Left ventricle myocardium superior (tissue), 1 donor: ENCODE measurements at regions of chr10 and their contacts with region 1.

Region 1: GRCh38 chr10:92880233-92880861 is 32.0 kb downstream of the EXOC6 start:
- DNase-seq: no peak
- ATAC-seq: peak; percentile 57

Region 2: DNA sequence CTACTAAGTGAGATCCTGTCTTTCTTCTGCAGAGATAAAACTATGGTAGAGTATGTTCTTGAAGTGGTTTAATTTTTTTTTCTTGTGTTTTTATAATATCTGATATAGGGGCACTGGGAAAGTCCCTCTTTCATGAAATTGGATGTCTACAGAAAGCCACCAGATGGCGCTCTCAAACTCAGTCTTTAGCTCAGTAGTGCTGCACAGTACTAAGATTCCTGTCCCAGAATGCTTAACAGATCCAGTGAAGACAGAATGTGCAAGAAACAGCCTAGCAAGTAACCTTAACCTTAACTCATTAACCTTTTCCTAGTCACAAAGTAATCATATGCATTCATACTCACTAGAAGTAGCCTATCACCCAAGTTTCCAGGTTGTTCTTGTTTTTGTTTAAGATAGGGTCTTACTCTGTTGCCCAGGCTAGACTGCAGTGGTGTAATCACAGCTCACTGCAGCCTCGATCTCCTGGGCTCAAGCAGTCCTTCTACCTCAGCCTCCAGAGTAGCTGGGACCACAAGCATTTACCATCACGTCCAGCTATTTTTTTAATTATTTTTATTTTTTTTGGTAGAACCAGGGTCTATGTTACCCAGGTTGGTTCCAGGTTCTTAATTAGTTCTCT is 363.2 kb before region 1 on chr10:
- intact Hi-C with region 1: loop called (anchors 10 kb)
- DNase-seq: no peak
- ATAC-seq: peak; percentile 81

Region 3: DNA sequence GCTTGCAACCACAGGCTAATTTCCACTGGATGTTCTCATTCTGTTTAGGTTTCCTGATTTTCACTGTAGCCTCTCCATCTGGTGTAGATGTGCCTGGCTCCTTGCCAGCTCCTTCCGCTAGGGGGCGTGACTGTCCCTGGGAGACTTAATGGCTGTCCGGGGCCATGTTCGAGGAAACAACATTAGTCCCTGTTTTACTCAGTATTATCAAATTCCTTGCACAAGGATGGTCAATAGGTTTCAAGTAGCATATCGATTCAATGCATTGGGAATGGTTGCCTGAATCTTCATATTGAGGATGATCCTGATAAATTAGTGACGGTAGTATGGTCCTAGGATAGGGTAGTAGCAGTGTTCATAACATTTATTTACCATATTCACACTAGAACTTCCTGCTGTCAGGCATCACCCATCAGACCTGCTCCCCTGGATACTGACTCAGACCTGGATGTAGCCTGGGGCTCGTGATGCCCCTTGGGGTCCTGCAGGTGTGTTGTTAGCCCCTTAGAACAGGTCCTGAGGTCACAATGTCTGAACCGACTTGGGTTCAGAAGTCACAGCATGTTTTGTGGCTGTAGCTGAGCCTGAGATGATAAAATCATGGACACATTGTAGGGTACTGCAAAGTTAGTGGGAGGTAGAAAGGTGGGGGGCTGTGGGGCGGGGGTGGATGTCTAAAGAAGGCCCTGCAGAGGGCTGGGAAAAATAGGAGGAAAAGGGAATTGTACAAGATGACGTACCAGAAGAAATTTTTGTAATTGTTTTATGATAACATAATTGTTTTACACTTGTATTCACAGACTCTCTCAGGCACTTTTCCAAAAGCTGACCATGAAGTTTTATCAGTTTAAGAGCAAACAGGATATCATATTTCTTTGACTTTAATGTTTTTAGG is 40.9 kb before region 1 on chr10:
- intact Hi-C with region 1: loop called (anchors 5 kb)
- DNase-seq: peak; percentile 73
- ATAC-seq: peak; percentile 34

Region 4: GRCh38 chr10:92972066-92972870 is 91.9 kb after region 1 on chr10:
- intact Hi-C with region 1: no loop called
- DNase-seq: no peak
- ATAC-seq: no peak

Region 5: DNA sequence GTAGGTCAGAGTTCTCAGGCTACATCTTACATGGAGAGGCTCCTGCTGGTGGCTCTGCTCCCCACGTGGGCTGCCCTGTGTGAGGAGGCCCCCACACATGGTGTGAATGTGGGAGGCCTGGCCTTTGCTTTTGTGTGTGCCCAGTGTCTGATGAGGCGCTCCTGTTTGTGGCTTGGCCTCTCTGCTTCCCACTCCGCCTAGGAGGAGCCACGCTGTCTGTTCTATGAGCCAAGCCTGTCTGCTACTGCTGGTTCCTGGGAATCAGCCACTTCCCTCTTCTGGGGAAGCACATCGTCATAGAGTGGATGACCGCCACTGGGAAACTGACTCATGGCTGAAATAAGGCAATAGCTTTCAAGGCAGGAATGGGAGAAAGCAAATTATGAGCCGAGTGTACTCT is 280.5 kb after region 1 on chr10:
- intact Hi-C with region 1: no loop called
- DNase-seq: peak; percentile 30
- ATAC-seq: peak; percentile 41